ENCODE measurements at regions of chr21 and their contacts with region 1.

Region 1: GRCh38 chr21:16194095-16194787 is 464.5 kb downstream of the USP25 start:
- DNase-seq: peak; percentile 34
- H3K4me3 ChIP-seq: peak overlapping the region; percentile 37
- H3K27me3 ChIP-seq: no peaks in the 10 kb centered on the region
- CTCF ChIP-seq: peak; percentile 21; the same call in 1 of the 2 replicates

Region 2: DNA sequence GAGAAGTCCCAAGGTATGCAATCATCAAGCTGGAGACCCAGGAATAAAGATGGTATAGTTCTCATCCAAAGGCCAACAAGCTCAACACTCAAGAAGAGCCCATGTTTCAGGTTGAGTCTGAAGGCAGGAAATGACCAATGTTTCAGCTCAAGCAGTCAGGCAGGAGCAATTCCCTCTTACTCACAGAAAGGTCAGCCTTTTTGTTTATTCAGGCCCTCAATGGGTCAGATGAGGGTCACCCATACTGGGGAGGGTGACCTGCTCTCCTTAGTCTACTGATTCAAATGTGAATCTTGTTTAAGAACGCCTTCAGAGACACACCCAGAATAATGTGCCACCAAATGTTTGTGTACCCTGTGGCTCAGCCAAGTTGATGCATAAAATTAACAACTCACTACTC is 202.1 kb before region 1 on chr21:
- CTCF ChIA-PET with region 1: no interaction called
- POLR2A ChIA-PET with region 1: no interaction called
- DNase-seq: no peak
- H3K4me3 ChIP-seq: no peak overlapping the region
- H3K27me3 ChIP-seq: no peaks in the 10 kb centered on the region
- CTCF ChIP-seq: no peak

Region 3: DNA sequence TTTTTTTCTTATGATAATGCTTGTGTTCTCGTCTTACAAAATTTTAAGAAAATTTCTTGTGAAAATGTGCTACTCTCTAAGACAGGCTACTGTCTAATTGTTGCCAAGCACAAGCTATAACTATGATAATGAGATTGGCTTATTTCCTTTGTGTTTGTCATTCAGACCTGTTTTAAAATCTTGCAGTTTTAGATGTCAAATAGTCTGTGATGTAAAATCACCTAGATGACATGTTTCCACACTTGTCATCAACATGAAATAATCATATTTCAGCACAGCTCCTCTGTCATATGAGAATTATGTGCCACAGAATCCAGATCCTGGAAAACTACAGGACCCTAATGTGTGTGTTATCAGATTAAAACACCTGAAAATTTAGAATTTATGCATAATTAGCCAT is 75.2 kb after region 1 on chr21:
- CTCF ChIA-PET with region 1: no interaction called
- POLR2A ChIA-PET with region 1: no interaction called
- DNase-seq: no peak
- H3K4me3 ChIP-seq: no peak overlapping the region
- H3K27me3 ChIP-seq: no peaks in the 10 kb centered on the region
- CTCF ChIP-seq: no peak

Region 4: GRCh38 chr21:16587681-16588375 is 393.6 kb after region 1 on chr21:
- CTCF ChIA-PET with region 1: no interaction called
- POLR2A ChIA-PET with region 1: interaction called, 13 read pairs
- DNase-seq: peak; percentile 31
- H3K4me3 ChIP-seq: peak overlapping the region; percentile 44
- H3K27me3 ChIP-seq: no peaks in the 10 kb centered on the region
- CTCF ChIP-seq: no peak